Right ventricle myocardium inferior (tissue), 1 donor: ENCODE measurements at regions of chr1 and their contacts with region 1.

Region 1: DNA sequence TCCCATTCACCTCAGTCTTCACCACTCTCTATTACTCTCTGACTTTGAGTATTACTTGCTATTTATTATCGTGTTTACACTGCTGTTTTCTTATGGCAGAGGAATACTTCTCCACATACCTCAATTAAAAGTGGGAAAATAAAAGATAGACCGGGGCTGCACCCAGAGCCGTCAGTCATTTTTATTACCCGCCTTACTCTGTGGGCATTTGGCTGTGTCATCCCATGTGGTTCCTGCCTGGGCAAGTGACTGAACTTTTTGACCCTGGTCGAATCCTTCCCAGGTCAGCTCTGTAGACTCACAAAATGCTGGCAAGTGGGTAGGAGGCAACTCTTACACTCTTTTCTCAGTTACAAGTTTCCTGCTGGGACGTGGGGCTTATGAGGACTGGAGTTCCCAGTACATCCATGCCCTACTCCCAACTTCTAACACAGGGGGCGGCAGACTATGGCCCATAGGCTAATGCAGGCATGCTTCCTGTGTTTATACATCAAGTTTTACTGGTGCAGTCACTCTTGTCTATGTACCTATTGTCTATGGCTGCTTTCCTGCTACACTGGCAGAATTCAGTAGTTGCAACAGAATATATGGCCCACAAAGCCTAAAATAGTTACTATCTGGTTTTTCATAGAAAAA is 69.5 kb upstream of the KCND3 start:
- DNase-seq: no peak
- ATAC-seq: no peak

Region 2: GRCh38 chr1:112247036-112247597 is 188.2 kb after region 1 on chr1:
- intact Hi-C with region 1: loop called (anchors 10 kb)
- DNase-seq: no peak
- ATAC-seq: no peak

Region 3: GRCh38 chr1:112337028-112337531 is 278.1 kb after region 1 on chr1:
- intact Hi-C with region 1: loop called (anchors 5 kb)
- DNase-seq: peak; percentile 72
- ATAC-seq: peak; percentile 88